ENCODE measurements at regions of chr16 and their contacts with region 1.

Region 1: GRCh38 chr16:2752035-2752849 is at the start of gene SRRM2:
- DNase-seq: peak; percentile 95
- ATAC-seq: peak; percentile 90
- H3K4me3 ChIP-seq: peak within 1 kb of the TSS; percentile 98
- H3K27ac ChIP-seq: peak within 1 kb of the TSS; percentile 99
- H3K4me1 ChIP-seq: peaks cover 17% of the 10 kb centered on the region; the same call in 1 of the 2 replicates
- H3K27me3 ChIP-seq: no peaks in the 10 kb centered on the region
- CTCF ChIP-seq: no peak
- EP300 ChIP-seq: no peak
- POLR2A ChIP-seq: peak; percentile 84
- RAD21 ChIP-seq: no peak
- polyA plus RNA-seq, gene SRRM2: 30.1 to 73.0 TPM

Region 2: GRCh38 chr16:2777231-2777902 is 25.1 kb after region 1 on chr16 and contains the start of gene ELOB:
- CTCF ChIA-PET with region 1: no interaction called
- POLR2A ChIA-PET with region 1: interaction called, 27 read pairs
- RAD21 ChIA-PET with region 1: interaction called, 4 read pairs
- SMC1A ChIA-PET with region 1: interaction called, 7 read pairs
- in situ Hi-C with region 1: no loop called
- intact Hi-C with region 1: loop called (anchors 2 kb)
- DNase-seq: no peak
- ATAC-seq: peak; percentile 94
- H3K4me3 ChIP-seq: peak within 1 kb of the TSS; percentile 89
- H3K27ac ChIP-seq: peak within 1 kb of the TSS; percentile 99
- H3K4me1 ChIP-seq: 0 out of 2 replicates have a peak, but pooled peaks cover 4% of the 10 kb centered on the region
- H3K27me3 ChIP-seq: no peaks in the 10 kb centered on the region
- CTCF ChIP-seq: no peak
- EP300 ChIP-seq: no peak
- POLR2A ChIP-seq: peak; percentile 90
- RAD21 ChIP-seq: no peak
- polyA plus RNA-seq, gene ELOB: 752 to 823 TPM

Measured in GM12878 (cell line).